Activated B cell treated with CpG ODN at 0.5 μM for 24 hours (primary cell): ENCODE measurements at regions of chr10 and their contacts with region 1.

Region 1: DNA sequence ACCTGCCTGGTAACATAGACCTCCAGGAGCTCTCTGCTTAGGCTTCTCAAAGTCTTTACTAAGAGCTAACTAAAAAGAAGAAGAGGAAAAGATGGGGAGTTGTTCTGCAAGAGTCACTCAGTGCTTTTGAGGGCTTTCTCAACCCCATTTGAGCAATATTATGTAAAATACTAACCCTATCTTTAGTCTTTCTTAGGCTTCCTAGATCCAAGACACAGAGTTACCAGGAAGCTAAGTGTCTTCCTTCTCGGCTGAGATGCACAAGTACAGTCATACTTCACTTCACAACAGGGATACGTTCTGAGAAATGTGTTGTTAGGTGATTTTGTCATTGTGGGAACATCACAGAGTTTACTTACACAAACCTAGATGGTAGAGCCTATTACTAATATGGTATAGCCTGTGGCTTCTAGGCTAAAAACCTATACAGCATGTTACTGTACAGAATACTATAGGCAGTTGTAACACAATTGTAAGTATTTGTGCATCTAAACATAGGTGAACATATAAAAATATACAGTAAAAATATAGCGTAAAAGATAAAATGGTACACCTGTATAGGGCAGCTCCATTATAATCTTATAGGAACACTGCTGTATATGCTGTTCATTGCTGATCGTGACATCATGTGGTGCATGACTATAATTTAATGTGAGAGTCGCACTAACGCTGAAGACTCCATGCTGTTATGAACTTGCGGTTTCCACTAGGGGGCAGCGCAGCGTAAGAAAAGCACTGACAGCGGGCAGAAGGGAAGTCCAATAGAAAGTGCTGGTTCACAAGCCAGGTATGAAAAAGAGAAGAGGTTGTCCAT is 16.3 kb downstream of the ANKRD22 start:
- DNase-seq: peak; percentile 66
- ATAC-seq: peak; percentile 98
- H3K4me3 Mint-ChIP-seq: no peak overlapping the region
- H3K27ac Mint-ChIP-seq: no peak overlapping the region
- H3K4me1 Mint-ChIP-seq: peaks cover 2% of the 10 kb centered on the region
- H3K27me3 Mint-ChIP-seq: peaks cover 5% of the 10 kb centered on the region
- CTCF ChIP-seq: no peak

Region 2: GRCh38 chr10:88880282-88881076 is 45.2 kb after region 1 on chr10:
- CTCF ChIA-PET with region 1: interaction called, 8 read pairs
- POLR2A ChIA-PET with region 1: interaction called, 9 read pairs
- intact Hi-C with region 1: loop called (anchors 1 kb)
- DNase-seq: peak; percentile 77
- ATAC-seq: peak; percentile 71
- H3K4me3 Mint-ChIP-seq: peak overlapping the region; percentile 96
- H3K27ac Mint-ChIP-seq: peak overlapping the region; percentile 99
- H3K4me1 Mint-ChIP-seq: peaks cover 52% of the 10 kb centered on the region
- H3K27me3 Mint-ChIP-seq: no peaks in the 10 kb centered on the region
- CTCF ChIP-seq: no peak

Region 3: GRCh38 chr10:88920986-88921593 is 85.8 kb after region 1 on chr10:
- CTCF ChIA-PET with region 1: interaction called, 17 read pairs
- POLR2A ChIA-PET with region 1: no interaction called
- intact Hi-C with region 1: no loop called
- DNase-seq: no peak
- ATAC-seq: no peak
- H3K4me3 Mint-ChIP-seq: no peak overlapping the region
- H3K27ac Mint-ChIP-seq: no peak overlapping the region
- H3K4me1 Mint-ChIP-seq: no peaks in the 10 kb centered on the region
- H3K27me3 Mint-ChIP-seq: no peaks in the 10 kb centered on the region
- CTCF ChIP-seq: no peak

Region 4: GRCh38 chr10:89029785-89030437 is 194.6 kb after region 1 on chr10:
- CTCF ChIA-PET with region 1: interaction called, 10 read pairs
- POLR2A ChIA-PET with region 1: no interaction called
- intact Hi-C with region 1: loop called (anchors 1 kb)
- DNase-seq: peak; percentile 22
- ATAC-seq: peak; percentile 82
- H3K4me3 Mint-ChIP-seq: no peak overlapping the region
- H3K27ac Mint-ChIP-seq: no peak overlapping the region
- H3K4me1 Mint-ChIP-seq: peaks cover 15% of the 10 kb centered on the region
- H3K27me3 Mint-ChIP-seq: no peaks in the 10 kb centered on the region
- CTCF ChIP-seq: peak; percentile 70

Region 5: DNA sequence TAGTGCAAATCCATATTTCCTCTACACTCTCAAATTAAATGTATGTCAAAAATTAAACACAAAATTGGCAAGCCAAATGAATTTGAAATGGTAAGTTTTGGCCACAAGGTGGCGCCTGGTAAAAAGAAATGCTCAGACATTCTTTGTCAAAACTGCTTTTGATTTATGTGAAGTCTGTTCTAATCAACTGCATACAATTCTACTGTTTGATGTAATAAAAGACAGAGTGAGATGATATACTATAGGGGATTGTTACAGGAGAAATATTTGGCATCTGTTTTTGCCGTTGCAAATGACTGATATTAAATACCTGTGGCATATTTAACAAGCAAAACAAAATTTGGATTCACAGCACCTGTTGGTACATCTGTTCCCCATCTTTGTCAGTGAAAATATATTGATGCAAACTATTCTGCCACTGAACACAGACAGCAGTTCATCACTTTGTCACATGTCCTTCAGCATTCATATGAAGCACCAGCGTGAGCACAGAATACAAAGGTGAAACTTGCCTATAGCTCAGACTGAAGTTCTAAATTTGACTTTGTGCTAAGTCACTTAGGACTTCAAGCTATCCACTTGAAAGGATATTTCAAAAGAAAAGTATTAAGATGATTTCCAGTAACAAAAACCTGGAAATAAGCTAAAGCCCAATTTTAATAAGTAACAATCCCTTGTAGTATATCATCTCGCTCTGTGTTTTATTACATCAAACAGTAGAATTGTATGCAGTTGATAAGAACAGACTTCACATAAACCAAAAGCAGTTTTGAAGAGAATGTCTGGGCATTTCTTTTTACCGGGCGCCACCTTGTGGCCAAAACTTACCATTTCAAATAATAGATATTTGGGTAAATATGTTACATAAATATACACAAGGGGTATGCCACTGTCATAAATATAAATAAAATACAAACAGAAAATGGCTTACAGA is 382.0 kb after region 1 on chr10:
- CTCF ChIA-PET with region 1: interaction called, 18 read pairs
- POLR2A ChIA-PET with region 1: interaction called, 4 read pairs
- intact Hi-C with region 1: loop called (anchors 1 kb)
- DNase-seq: peak; percentile 20
- ATAC-seq: peak; percentile 49
- H3K4me3 Mint-ChIP-seq: no peak overlapping the region
- H3K27ac Mint-ChIP-seq: no peak overlapping the region
- H3K4me1 Mint-ChIP-seq: peaks cover 10% of the 10 kb centered on the region
- H3K27me3 Mint-ChIP-seq: peaks cover 2% of the 10 kb centered on the region
- CTCF ChIP-seq: no peak